HEK293 (cell line): ENCODE measurements at regions of chr1 and their contacts with region 1.

Region 1: GRCh38 chr1:2194898-2195673 is 514 bp upstream of the FAAP20 start:
- H3K4me3 ChIP-seq: peak overlapping the region; percentile 61
- H3K27ac ChIP-seq: peak overlapping the region; percentile 52; the same call in 1 of the 2 replicates
- H3K4me1 ChIP-seq: no peaks in the 10 kb centered on the region
- CTCF ChIP-seq: peak; percentile 96

Region 2: DNA sequence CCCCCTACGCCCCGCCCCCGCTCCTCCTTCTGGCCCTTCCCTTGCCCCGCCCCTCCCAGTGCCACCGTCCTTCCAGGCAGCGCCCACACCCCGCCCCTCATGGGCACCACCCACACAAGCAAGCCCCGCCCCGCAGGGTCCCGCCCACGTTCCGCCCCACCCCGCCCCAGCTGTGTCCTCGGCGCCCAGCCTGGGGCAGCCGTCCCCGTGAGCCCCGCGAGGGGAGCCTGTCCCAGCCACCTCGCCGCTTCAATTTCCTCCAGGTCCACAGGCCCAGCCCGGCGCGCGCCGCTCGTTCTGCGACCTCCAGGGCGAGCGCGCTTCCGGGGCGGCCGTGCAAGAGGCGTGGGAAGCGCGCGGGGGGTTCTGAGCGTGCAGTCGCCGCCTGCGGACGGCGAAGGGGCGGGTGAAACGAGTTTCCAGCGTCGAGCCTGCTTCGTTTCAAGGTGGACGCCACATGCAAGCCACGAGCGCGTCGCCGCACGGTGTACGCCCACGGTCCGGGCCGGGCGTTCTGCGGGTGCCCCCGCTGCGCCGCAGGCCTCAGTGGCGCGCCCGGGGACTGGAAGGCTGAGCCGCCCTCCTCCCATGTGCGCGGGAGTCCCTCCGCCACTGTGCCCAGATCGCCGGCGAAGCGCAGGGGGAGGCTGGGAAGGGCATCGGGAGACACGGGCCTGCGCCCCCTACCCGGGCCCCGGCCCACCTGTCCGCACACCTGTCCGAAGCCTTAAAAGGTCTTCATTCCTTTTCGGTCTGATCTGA is 10.3 kb after region 1 on chr1:
- CTCF ChIA-PET with region 1: interaction called, 12 read pairs
- POLR2A ChIA-PET with region 1: interaction called, 8 read pairs
- H3K4me3 ChIP-seq: peak overlapping the region; percentile 19; the same call in 1 of the 2 replicates
- H3K27ac ChIP-seq: no peak overlapping the region; the same call in 1 of the 2 replicates
- H3K4me1 ChIP-seq: peaks cover 5% of the 10 kb centered on the region
- CTCF ChIP-seq: no peak

Region 3: DNA sequence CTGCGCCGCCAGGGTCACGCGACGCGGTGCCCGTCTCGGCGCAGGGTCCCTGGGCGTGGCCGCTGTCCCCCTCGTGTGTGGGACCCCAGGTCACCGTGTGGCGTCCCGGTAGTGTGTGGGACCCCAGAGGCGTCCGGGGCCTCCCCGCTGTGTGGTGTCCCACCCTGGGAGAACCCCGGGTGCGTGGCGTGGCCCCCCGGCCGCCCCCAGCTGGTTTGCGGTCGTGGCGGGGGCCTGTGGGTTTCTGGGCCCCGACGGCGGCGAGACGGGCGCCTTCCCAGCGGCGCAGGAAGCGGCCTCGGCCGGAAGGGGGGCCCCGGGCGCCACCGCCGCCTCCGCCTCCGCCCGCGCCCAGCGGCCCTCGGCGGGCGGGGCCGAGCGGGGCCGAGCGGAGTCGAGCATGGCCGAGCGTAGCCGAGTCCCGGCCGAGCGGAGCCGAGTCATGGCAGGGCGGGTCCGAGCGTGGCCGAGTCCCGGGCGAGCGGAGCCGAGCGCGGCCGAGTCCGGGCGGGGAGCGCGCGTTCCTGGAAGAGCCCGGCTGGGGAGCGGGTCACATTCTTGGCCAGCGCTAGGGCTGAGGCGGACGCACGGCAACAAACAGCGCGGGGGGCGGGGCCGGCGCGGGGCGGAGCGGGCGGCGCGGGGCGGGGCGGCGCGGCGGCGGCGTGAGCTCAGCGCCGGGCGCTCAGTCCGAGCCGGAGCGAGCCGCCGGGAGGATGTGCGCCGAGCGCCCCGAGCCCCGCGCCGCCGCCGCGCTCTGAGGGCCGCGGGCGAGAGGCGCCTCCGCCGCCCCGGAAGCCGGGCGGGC is 32.5 kb after region 1 on chr1:
- CTCF ChIA-PET with region 1: interaction called, 8 read pairs
- POLR2A ChIA-PET with region 1: interaction called, 14 read pairs
- H3K4me3 ChIP-seq: peak overlapping the region; percentile 78
- H3K27ac ChIP-seq: peak overlapping the region; percentile 94
- H3K4me1 ChIP-seq: no peaks in the 10 kb centered on the region; the same call in 1 of the 2 replicates
- CTCF ChIP-seq: peak; percentile 26; the same call in 1 of the 2 replicates

Region 4: GRCh38 chr1:2381741-2382620 is 186.9 kb after region 1 on chr1:
- CTCF ChIA-PET with region 1: interaction called, 105 read pairs
- POLR2A ChIA-PET with region 1: interaction called, 24 read pairs
- H3K4me3 ChIP-seq: no peak overlapping the region
- H3K27ac ChIP-seq: no peak overlapping the region
- H3K4me1 ChIP-seq: no peaks in the 10 kb centered on the region
- CTCF ChIP-seq: peak; percentile 96

Region 5: DNA sequence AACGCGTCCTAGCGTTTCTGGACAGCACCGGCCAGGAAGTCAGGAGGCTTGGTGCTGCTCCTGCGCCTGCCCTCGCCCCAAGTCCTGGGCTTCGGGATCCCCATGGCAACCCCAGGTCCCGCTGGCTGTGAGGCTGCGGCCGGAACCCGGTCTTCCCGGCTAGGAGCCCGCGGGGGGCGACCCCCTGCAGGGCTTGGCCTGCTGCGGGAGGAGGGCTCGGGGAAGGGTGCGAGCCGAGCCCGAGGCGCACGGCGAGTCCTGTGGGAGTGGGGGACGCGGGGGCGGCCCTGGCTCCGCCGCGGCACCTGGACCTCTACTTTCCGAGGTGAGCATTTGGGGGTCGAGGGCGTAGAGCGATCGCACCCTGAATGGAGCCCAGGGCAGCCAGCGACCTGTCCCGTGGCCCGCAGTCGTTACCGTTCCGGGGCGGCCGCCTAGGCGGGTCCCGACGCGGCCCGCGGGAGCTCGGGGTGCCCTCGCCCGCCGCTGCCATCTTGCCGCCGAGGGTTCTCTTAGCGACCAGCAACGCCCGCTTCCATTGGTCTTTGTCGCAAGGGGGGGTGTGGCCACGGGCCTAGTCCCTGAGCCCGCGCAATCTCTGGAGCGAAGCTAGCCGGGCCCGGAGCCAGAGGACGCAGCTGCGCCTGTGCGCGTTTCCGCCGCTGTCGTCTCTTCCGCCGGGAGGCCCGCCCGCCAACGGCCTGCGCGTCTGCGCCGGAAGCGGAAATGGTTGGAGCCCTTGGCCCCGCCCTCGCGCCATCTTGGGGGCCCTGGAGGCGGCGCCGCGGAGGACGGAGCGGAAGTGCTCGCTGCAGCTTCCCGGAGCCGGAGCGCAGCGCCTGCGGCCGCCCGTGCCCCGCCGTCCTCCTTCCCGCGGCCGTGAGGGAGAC is 196.2 kb after region 1 on chr1 and contains the starts of genes MORN1 and RER1:
- CTCF ChIA-PET with region 1: interaction called, 6 read pairs
- POLR2A ChIA-PET with region 1: interaction called, 13 read pairs
- H3K4me3 ChIP-seq: peak within 1 kb of the TSS; percentile 93
- H3K27ac ChIP-seq: peak within 1 kb of the TSS; percentile 75
- H3K4me1 ChIP-seq: peaks cover 3% of the 10 kb centered on the region; the same call in 1 of the 2 replicates
- CTCF ChIP-seq: no peak